ENCODE measurements at regions of chr22 and their contacts with region 1.

Region 1: DNA sequence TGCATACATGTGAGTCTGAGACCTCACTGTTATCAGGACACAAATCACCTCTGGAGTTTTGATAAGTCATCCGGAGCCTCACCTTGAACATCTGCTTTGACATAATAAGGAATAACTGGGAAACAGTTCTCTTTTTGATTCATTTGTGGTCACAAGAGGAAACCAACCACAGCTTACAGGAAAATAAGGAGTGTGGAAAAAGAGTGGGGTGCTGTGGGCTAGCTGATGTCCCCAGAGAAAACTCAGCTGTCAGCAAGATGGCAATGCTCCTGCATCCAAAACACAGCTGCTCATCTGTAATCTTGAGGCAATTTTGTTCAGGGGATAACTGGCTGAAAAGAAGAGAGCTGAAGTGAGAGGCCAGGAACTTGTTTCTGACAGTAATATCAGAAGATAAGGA is 416.4 kb upstream of the SYN3 start:
- DNase-seq: no peak
- ATAC-seq: no peak
- H3K4me3 Mint-ChIP-seq: no peak overlapping the region
- H3K27ac Mint-ChIP-seq: no peak overlapping the region
- H3K4me1 Mint-ChIP-seq: peaks cover 14% of the 10 kb centered on the region
- H3K27me3 Mint-ChIP-seq: no peaks in the 10 kb centered on the region
- CTCF ChIP-seq: no peak

Region 2: DNA sequence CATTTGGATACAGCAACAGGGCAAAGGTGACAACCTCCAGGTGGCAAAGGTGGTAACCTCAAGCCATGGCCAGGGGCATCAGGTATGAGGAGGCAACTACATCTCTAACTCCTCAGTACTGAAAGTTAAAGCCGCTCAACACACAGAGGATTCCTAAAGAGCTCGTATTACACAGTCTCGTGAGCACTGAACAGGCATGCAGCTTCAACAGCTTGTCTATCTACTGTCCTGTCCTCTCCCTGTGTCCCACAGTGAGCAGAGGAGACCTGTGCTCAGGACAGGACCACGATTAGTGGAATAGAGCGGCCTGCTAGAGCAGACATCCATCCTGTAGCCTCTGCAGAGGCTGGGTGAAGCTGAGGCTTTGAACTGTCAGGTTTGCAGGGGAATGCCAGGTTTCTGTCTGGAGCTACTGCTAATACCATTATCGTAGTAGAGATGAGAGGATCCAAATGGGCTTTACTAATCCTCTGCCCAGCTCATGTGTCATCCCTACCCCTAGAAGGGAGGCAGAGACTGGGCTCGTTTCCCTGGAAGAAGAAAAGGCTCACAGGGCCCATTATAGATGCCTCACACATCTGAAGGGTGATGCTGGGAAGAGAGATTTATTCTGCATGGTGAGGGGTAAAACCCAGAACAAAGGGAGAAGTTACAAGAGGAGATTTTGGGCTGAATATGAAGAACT is 30.5 kb after region 1 on chr22:
- CTCF ChIA-PET with region 1: no interaction called
- POLR2A ChIA-PET with region 1: no interaction called
- intact Hi-C with region 1: no loop called
- DNase-seq: no peak
- ATAC-seq: no peak
- H3K4me3 Mint-ChIP-seq: no peak overlapping the region
- H3K27ac Mint-ChIP-seq: no peak overlapping the region
- H3K4me1 Mint-ChIP-seq: no peaks in the 10 kb centered on the region
- H3K27me3 Mint-ChIP-seq: no peaks in the 10 kb centered on the region
- CTCF ChIP-seq: no peak

Region 3: GRCh38 chr22:33678523-33678922 is 203.9 kb after region 1 on chr22:
- CTCF ChIA-PET with region 1: no interaction called
- POLR2A ChIA-PET with region 1: interaction called, 14 read pairs
- intact Hi-C with region 1: no loop called
- DNase-seq: no peak
- ATAC-seq: no peak
- H3K4me3 Mint-ChIP-seq: no peak overlapping the region
- H3K27ac Mint-ChIP-seq: no peak overlapping the region
- H3K4me1 Mint-ChIP-seq: peaks cover 9% of the 10 kb centered on the region
- H3K27me3 Mint-ChIP-seq: no peaks in the 10 kb centered on the region
- CTCF ChIP-seq: no peak

Measured in activated B cell treated with CpG ODN at 0.5 μM for 24 hours (primary cell).